A673 (cell line): ENCODE measurements at regions of chr9 and their contacts with region 1.

Region 1: GRCh38 chr9:3894772-3895171 is 369.0 kb upstream of the RFX3 start:
- DNase-seq: no peak
- H3K4me3 ChIP-seq: no peak overlapping the region
- H3K27ac ChIP-seq: no peak overlapping the region
- H3K4me1 ChIP-seq: no peaks in the 10 kb centered on the region
- H3K27me3 ChIP-seq: no peaks in the 10 kb centered on the region
- CTCF ChIP-seq: no peak

Region 2: DNA sequence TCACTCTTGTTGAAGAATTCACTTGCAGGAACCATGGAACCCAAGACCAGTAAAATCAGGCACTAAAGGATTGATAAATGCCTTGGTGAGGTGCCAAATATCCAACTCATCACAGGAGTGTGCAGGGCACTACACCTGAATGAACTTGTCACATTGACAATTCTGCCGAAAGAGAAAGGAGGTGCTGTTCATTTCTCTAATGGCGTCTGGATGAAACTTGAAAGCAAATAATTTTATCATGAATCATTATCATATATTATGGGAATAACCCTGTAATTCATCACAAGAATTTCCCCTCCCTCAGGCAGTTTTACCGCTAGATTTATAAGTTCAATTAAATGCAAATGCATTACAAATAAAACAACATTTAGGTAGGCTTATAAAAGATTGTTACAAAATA is 45.0 kb after region 1 on chr9:
- CTCF ChIA-PET with region 1: no interaction called
- POLR2A ChIA-PET with region 1: no interaction called
- intact Hi-C with region 1: no loop called
- DNase-seq: no peak
- H3K4me3 ChIP-seq: no peak overlapping the region
- H3K27ac ChIP-seq: no peak overlapping the region
- H3K4me1 ChIP-seq: no peaks in the 10 kb centered on the region
- H3K27me3 ChIP-seq: no peaks in the 10 kb centered on the region
- CTCF ChIP-seq: no peak

Region 3: GRCh38 chr9:4038182-4038723 is 143.5 kb after region 1 on chr9:
- CTCF ChIA-PET with region 1: interaction called, 10 read pairs
- POLR2A ChIA-PET with region 1: no interaction called
- intact Hi-C with region 1: no loop called
- DNase-seq: no peak
- H3K4me3 ChIP-seq: no peak overlapping the region
- H3K27ac ChIP-seq: no peak overlapping the region
- H3K4me1 ChIP-seq: peaks cover 8% of the 10 kb centered on the region
- H3K27me3 ChIP-seq: no peaks in the 10 kb centered on the region
- CTCF ChIP-seq: no peak